HCT116 (cell line): ENCODE measurements at regions of chr5 and their contacts with region 1.

Region 1: DNA sequence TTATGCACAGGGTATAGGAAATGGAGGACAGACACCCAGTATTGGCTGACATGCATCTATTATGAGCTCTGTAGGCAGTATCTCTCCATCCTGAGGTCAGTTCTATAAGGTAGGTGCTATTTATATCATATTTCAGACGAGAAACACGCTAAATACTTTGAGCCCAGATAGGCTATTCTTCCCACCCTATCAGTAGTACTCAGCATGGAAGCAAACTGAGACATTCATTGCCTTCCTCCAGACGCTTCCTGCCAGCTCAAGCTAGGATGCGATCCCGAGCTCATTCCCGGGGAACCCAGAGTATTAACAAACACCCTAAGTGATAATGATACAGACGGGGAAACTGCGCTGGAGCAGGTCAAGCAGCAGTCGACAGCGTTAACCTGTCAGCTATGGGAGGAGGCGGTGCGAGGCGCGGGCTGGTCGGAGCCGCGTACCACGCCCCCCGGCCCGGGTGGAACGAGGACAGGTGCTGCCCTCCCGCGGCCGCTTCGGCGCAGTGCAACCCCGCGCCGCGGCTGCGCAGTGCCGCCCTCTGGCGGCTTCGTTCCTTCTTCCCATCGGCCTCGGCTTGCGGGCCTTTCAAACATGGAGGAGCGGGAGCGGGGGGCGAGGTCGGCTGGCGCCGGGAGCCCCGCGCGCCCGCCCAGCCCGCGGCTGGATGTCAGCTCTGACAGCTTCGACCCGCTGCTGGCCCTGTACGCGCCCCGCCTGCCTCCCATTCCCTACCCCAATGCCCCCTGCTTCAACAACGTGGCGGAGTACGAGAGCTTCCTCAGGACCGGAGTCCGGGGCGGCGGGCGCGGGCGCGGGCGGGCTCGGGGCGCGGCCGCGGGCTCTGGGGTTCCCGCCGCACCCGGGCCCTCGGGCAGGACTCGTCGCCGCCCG is at the start of gene LSM11:
- DNase-seq: peak; percentile 66
- ATAC-seq: peak; percentile 93
- H3K4me3 ChIP-seq: peak within 1 kb of the TSS; percentile 72 to 82
- H3K27ac ChIP-seq: peak within 1 kb of the TSS; percentile 53; the same call in 1 of the 2 replicates
- H3K4me1 ChIP-seq: peaks cover 8 to 24% of the 10 kb centered on the region in 2 experiments; a peak in 2 of 4 replicates
- H3K27me3 ChIP-seq: no peaks in the 10 kb centered on the region
- CTCF ChIP-seq: peak; percentile 95 to 100 (median 99)
- POLR2A ChIP-seq: no peak
- RAD21 ChIP-seq: peak; percentile 97
- total RNA-seq, gene LSM11: 6.2 TPM

Region 2: DNA sequence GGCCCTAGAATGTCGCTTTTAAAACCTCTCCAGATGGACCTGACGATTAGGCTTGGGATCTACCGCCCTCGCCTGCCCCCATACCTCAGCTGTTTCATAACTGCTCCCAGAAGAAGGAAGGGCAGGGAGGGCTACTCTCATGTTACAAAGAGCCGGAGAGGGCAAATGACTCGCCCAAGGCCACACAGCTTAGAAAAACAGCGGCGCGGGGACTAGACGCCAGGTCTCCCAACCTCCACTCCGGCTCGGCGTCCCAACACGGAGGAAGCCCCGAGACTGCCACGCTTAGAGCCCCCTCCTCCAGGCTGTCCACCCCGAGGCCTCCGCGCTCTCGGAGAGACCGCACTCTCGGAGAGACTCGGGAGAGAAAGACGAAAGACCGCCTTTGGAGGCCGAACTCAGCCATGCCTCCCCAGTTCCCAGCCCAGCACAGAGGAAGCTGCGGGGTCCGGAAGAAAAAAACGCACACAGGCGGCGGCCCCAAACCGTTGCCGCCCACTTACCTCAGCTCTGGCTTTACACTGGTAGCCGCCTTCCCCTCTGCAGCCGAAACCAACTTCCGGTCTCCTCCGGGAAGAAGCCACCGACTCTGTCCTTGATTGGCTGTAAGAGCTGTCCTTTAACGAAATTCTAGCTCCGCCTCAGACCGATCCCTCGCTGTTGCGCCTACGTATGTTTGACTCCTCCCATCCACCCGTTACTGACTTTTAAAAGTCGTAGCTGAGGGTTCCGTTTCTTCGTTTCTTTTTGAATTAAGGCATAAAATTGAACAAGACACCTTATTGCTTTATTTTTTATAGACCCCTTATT is 600.9 kb before region 1 on chr5 and contains the start of gene MED7:
- CTCF ChIA-PET with region 1: no interaction called
- POLR2A ChIA-PET with region 1: no interaction called
- RAD21 ChIA-PET with region 1: no interaction called
- intact Hi-C with region 1: loop called (anchors 10 kb)
- DNase-seq: peak; percentile 99
- ATAC-seq: peak; percentile 99
- H3K4me3 ChIP-seq: peak within 1 kb of the TSS; percentile 94 to 95
- H3K27ac ChIP-seq: peak within 1 kb of the TSS; percentile 73
- H3K4me1 ChIP-seq: peaks cover 5 to 13% of the 10 kb centered on the region in 2 experiments; a peak in 3 of 4 replicates
- H3K27me3 ChIP-seq: no peaks in the 10 kb centered on the region
- CTCF ChIP-seq: no peak
- POLR2A ChIP-seq: peak; percentile 87
- RAD21 ChIP-seq: no peak
- total RNA-seq, gene MED7: 9.1 TPM

Region 3: DNA sequence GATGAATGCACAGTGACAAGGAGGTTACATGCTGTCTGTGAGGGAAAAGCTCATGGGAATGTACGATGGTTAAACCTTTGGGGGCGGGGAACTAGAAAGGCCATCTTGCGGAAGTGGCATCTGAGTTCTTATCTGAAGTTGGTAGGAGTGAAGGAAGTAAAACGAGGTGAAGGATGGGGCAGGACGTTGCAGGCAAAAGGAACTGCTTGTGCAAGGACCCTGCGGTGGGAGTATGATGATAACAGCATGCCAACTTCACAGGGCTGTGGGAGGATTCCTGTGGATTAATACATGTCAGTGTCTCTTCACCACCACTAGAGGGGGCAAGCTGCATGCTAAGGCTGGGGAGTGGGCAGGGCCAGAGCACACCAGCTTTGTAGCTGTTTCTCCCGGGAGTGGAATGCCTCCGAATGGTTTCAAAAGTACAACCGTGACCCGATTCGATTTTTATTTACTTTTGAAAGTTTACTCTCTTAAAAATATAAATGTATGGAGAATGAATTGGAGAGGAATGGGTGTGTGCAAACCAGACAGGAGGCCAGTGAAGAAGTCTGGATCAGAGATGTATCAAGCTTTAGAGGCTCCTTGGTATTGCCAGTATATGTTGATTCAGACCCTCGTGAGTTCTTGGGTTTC is 415.0 kb before region 1 on chr5:
- CTCF ChIA-PET with region 1: interaction called, 11 read pairs
- POLR2A ChIA-PET with region 1: no interaction called
- RAD21 ChIA-PET with region 1: interaction called, 3 to 4 read pairs
- intact Hi-C with region 1: loop called (anchors 1 kb)
- DNase-seq: peak; percentile 58
- ATAC-seq: peak; percentile 98
- H3K4me3 ChIP-seq: 0 out of 4 replicates have a peak overlapping the region, but pooled peaks of 1 of the 2 experiments have one; percentile 12
- H3K27ac ChIP-seq: no peak overlapping the region
- H3K4me1 ChIP-seq: peaks cover 0 to 4% of the 10 kb centered on the region in 2 experiments; a peak in 1 of 4 replicates
- H3K27me3 ChIP-seq: no peaks in the 10 kb centered on the region
- CTCF ChIP-seq: peak; percentile 92 to 95 (median 92)
- POLR2A ChIP-seq: no peak
- RAD21 ChIP-seq: peak; percentile 91

Region 4: DNA sequence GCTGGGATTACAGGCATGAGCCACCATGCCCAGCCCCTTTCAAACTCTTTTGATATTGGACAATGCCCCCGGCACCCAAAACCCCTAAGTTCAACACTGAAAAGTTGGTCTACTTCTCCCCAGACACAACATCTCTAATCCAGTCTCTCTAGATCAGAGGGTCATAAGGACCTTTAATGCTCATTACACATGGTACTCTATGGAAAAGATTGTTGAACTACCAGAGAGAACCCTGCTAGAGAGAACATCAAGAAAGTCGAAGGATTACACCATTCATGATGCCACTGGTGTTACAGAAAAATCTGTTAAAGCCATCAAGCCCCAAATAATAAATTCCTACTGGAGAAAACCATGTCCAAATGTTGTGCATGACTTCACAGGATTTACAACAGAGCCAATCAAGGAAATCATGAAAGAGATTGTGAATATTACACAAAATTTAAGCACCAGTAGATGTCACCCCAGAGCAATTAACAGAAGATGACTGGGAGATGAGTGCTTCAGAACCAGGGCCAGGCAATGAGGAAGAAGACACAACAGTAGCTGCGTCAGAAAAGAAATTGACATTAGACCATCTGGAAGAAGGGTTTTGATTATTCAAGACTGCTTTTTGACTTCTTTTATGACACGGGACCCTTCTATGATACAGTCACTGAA is 311.7 kb before region 1 on chr5:
- CTCF ChIA-PET with region 1: interaction called, 4 read pairs
- POLR2A ChIA-PET with region 1: no interaction called
- RAD21 ChIA-PET with region 1: no interaction called
- intact Hi-C with region 1: loop called (anchors 5 kb)
- DNase-seq: peak; percentile 38
- ATAC-seq: peak; percentile 98
- H3K4me3 ChIP-seq: no peak overlapping the region
- H3K27ac ChIP-seq: no peak overlapping the region
- H3K4me1 ChIP-seq: peaks cover 0 to 7% of the 10 kb centered on the region in 2 experiments; a peak in 2 of 4 replicates
- H3K27me3 ChIP-seq: no peaks in the 10 kb centered on the region
- CTCF ChIP-seq: peak; percentile 39 to 85 (median 60); a peak in 4 of 6 replicates
- POLR2A ChIP-seq: no peak
- RAD21 ChIP-seq: peak; percentile 84

Region 5: GRCh38 chr5:157669701-157670097 is 73.7 kb before region 1 on chr5:
- CTCF ChIA-PET with region 1: interaction called, 11 read pairs
- POLR2A ChIA-PET with region 1: no interaction called
- RAD21 ChIA-PET with region 1: interaction called in 1 of 2 experiments, 3 read pairs
- intact Hi-C with region 1: loop called (anchors 1 kb)
- DNase-seq: no peak
- ATAC-seq: no peak
- H3K4me3 ChIP-seq: no peak overlapping the region
- H3K27ac ChIP-seq: no peak overlapping the region
- H3K4me1 ChIP-seq: peaks cover 0 to 9% of the 10 kb centered on the region in 2 experiments; a peak in 2 of 4 replicates
- H3K27me3 ChIP-seq: no peaks in the 10 kb centered on the region
- CTCF ChIP-seq: no peak
- POLR2A ChIP-seq: no peak
- RAD21 ChIP-seq: no peak